ENCODE measurements at regions of chr12 and their contacts with region 1.

Region 1: GRCh38 chr12:98490501-98491453 is 24.6 kb upstream of the TMPO start:
- DNase-seq: peak; percentile 73 to 87 (median 76)
- H3K4me3 ChIP-seq: no peak overlapping the region
- H3K4me3 Mint-ChIP-seq: peak overlapping the region in 4 of 7 donors; percentile 3 to 71 (median 31)
- H3K27ac ChIP-seq: no peak overlapping the region
- H3K27ac Mint-ChIP-seq: peak overlapping the region; percentile 9 to 91 (median 83)
- H3K4me1 ChIP-seq: no peaks in the 10 kb centered on the region
- H3K4me1 Mint-ChIP-seq: peaks cover 5 to 11% (median 7%) of the 10 kb centered on the region in 3 donors
- H3K27me3 ChIP-seq: no peaks in the 10 kb centered on the region
- H3K27me3 Mint-ChIP-seq: peaks cover 0 to 2% of the 10 kb centered on the region in 2 donors

Region 2: DNA sequence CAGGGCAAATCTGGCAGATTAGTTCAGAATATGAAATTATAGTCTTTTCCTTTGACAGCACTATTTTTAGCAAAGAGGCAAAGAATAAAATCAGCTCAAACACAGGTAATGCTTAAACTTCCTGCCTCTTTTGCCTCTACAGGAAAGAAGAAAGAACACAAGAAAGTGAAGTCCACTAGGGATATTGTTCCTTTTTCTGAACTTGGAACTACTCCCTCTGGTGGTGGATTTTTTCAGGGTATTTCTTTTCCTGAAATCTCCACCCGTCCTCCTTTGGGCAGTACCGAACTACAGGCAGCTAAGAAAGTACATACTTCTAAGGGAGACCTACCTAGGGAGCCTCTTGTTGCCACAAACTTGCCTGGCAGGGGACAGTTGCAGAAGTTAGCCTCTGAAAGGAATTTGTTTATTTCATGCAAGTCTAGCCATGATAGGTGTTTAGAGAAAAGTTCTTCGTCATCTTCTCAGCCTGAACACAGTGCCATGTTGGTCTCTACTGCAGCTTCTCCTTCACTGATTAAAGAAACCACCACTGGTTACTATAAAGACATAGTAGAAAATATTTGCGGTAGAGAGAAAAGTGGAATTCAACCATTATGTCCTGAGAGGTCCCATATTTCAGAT is 42.0 kb after region 1 on chr12:
- CTCF ChIA-PET with region 1: interaction called, 12 read pairs
- POLR2A ChIA-PET with region 1: interaction called, 5 read pairs
- DNase-seq: peak in 2 of 5 donors; percentile 30 to 44
- H3K4me3 ChIP-seq: no peak overlapping the region
- H3K4me3 Mint-ChIP-seq: no peak overlapping the region
- H3K27ac ChIP-seq: no peak overlapping the region
- H3K27ac Mint-ChIP-seq: peak overlapping the region in 3 of 8 donors; percentile 45 to 50 (median 46)
- H3K4me1 ChIP-seq: no peaks in the 10 kb centered on the region
- H3K4me1 Mint-ChIP-seq: peaks cover 12 to 47% (median 27%) of the 10 kb centered on the region in 3 donors
- H3K27me3 ChIP-seq: no peaks in the 10 kb centered on the region
- H3K27me3 Mint-ChIP-seq: no peaks in the 10 kb centered on the region

Measured in CD8-positive, alpha-beta memory T cell (primary cell).